ENCODE measurements at regions of chr9 and their contacts with region 1.

Region 1: GRCh38 chr9:135968083-135968476 is 6.9 kb upstream of the UBAC1 start:
- DNase-seq: no peak
- H3K4me3 ChIP-seq: no peak overlapping the region
- H3K27ac ChIP-seq: no peak overlapping the region
- H3K4me1 ChIP-seq: peaks cover 0 to 12% (median 0%) of the 10 kb centered on the region in 4 donors
- H3K27me3 ChIP-seq: peaks cover 0 to 23% of the 10 kb centered on the region in 2 donors
- CTCF ChIP-seq: no peak

Region 2: GRCh38 chr9:136122425-136123383 is 154.6 kb after region 1 on chr9:
- intact Hi-C with region 1: loop called (anchors 1 kb)
- DNase-seq: peak; percentile 67 to 83
- H3K4me3 ChIP-seq: no peak overlapping the region
- H3K27ac ChIP-seq: no peak overlapping the region
- H3K4me1 ChIP-seq: peaks cover 0 to 23% (median 16%) of the 10 kb centered on the region in 4 donors
- H3K27me3 ChIP-seq: peaks cover 0 to 29% of the 10 kb centered on the region in 2 donors
- CTCF ChIP-seq: peak; percentile 97 to 99